Activated CD4-positive, alpha-beta memory T cell treated with anti-CD3 and anti-CD28 coated beads for 36 hours (primary cell): ENCODE measurements at regions of chr14 and their contacts with region 1.

Region 1: GRCh38 chr14:89954070-89955028 is at the start of gene EFCAB11:
- DNase-seq: peak; percentile 98
- H3K4me3 Mint-ChIP-seq: peak within 1 kb of the TSS; percentile 96
- H3K27ac Mint-ChIP-seq: peak within 1 kb of the TSS; percentile 97
- H3K4me1 Mint-ChIP-seq: peaks cover 36% of the 10 kb centered on the region
- H3K27me3 Mint-ChIP-seq: no peaks in the 10 kb centered on the region
- total RNA-seq, gene EFCAB11: 10.6 to 10.8 TPM

Region 2: GRCh38 chr14:88792572-88793258 is 1161.6 kb before region 1 on chr14 and contains the start of gene EML5:
- CTCF ChIA-PET with region 1: no interaction called
- POLR2A ChIA-PET with region 1: no interaction called
- intact Hi-C with region 1: loop called (anchors 5 kb)
- DNase-seq: peak; percentile 87
- H3K4me3 Mint-ChIP-seq: peak within 1 kb of the TSS; percentile 89
- H3K27ac Mint-ChIP-seq: peak within 1 kb of the TSS; percentile 74
- H3K4me1 Mint-ChIP-seq: peaks cover 25% of the 10 kb centered on the region
- H3K27me3 Mint-ChIP-seq: peaks cover 3% of the 10 kb centered on the region
- total RNA-seq, gene EML5: 5.7 to 6.2 TPM

Region 3: DNA sequence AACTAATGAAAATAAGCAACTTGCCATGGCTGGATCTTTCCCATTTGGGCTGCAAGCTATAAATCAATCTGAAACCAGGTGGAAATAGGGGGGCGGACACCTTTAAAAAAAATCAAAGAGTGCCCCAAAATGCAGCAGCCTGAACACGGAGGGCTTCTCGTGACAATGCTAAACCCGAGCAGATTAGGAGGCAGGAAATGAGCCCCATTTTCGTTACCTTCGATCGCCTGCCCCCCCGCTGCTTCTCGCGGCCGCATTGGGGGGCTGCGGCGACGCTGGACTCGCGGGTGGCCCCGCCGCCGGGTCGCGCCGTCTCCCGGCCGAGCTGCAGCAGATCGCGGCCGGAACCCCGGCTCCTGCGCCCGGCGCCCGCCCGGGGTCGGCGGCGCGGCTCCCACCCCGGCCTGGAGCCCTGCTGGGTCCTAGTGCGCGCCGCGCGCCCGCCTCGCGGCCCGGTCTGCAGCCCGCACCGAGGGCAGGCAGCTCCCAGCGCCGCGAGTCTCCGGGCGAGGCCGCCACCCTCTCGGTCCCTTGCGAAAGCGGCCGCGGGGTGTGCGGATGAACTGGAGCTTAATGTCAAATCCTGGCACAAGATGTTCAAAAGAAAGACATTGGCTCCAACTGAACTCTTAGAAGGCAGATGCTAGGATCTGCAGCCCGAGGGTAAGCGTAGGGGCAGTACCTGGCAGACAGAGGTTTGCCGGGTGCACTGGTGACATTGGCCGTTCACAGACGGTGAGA is 335.4 kb before region 1 on chr14:
- CTCF ChIA-PET with region 1: no interaction called
- POLR2A ChIA-PET with region 1: interaction called, 3 read pairs
- intact Hi-C with region 1: loop called (anchors 2 kb)
- DNase-seq: peak; percentile 71
- H3K4me3 Mint-ChIP-seq: peak overlapping the region; percentile 91
- H3K27ac Mint-ChIP-seq: peak overlapping the region; percentile 98
- H3K4me1 Mint-ChIP-seq: peaks cover 66% of the 10 kb centered on the region
- H3K27me3 Mint-ChIP-seq: no peaks in the 10 kb centered on the region

Region 4: DNA sequence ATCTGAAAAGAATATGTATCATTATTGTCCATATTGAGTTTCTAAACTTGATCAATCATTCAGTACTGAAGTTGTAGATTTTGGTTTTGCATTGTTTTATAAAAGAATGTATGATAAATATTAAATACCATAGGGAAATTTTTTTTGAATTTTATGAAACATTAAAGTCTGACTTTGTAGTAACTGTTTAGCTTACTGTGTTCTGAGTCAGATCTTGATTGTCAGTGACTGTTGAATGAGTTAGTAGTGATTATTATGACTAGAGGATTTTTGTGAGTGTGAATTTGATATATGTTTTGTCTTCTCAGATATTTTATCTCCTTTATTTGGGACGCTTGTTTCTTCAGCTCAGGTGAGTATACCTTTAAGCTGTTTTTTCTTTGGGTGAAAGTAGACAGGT is 11.5 kb after region 1 on chr14:
- CTCF ChIA-PET with region 1: interaction called, 10 read pairs
- POLR2A ChIA-PET with region 1: interaction called, 4 read pairs
- intact Hi-C with region 1: no loop called
- DNase-seq: no peak
- H3K4me3 Mint-ChIP-seq: no peak overlapping the region
- H3K27ac Mint-ChIP-seq: no peak overlapping the region
- H3K4me1 Mint-ChIP-seq: peaks cover 36% of the 10 kb centered on the region
- H3K27me3 Mint-ChIP-seq: no peaks in the 10 kb centered on the region

Region 5: DNA sequence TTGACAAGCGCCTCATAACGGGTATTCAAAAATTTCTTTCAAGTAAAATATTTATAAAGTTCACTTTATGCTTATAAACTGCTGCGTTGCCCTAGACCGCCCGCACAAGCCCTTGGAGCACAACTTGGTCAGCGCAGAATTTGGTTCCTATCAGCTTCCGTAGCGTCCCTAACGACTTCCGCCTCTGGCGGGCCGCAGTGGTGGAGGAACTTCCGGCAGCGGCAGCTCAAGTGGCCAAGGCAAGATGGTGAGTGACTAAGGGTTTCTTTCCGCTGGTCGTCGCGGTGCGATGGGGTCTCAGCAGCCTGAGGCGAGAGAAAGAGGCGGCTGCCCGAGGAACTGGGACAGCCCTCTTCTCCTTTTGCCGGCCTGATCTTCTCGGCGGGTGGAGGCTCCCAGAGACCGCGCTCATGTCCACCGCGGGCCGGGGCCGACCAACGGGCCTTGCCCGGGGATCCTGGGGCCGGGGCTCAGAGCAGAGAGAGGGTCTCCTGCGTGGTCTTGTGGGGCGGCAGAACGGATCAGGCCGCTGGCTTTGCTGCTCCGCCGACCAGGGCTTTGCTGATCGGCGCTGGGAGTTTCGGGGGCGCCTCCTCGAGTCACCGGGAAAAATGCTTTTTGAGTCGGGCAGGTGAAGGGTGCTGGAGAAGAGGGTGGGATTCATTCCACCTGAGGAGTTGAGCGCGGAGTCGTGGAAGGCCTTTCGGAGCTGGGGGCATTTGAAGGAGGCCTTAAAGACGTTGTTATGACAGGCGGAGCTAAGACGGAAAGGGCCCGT is 302.2 kb after region 1 on chr14 and contains the start of gene PSMC1:
- CTCF ChIA-PET with region 1: interaction called, 3 read pairs
- POLR2A ChIA-PET with region 1: interaction called, 11 read pairs
- intact Hi-C with region 1: loop called (anchors 1 kb)
- DNase-seq: peak; percentile 95
- H3K4me3 Mint-ChIP-seq: peak within 1 kb of the TSS; percentile 98
- H3K27ac Mint-ChIP-seq: peak within 1 kb of the TSS; percentile 94
- H3K4me1 Mint-ChIP-seq: peaks cover 26% of the 10 kb centered on the region
- H3K27me3 Mint-ChIP-seq: peaks cover 5% of the 10 kb centered on the region
- total RNA-seq, gene PSMC1: 107 to 108 TPM

Region 6: GRCh38 chr14:90399541-90400444 is 445.4 kb after region 1 on chr14:
- CTCF ChIA-PET with region 1: no interaction called
- POLR2A ChIA-PET with region 1: interaction called, 4 read pairs
- intact Hi-C with region 1: loop called (anchors 2 kb)
- DNase-seq: peak; percentile 92
- H3K4me3 Mint-ChIP-seq: peak overlapping the region; percentile 97
- H3K27ac Mint-ChIP-seq: peak overlapping the region; percentile 99
- H3K4me1 Mint-ChIP-seq: peaks cover 52% of the 10 kb centered on the region
- H3K27me3 Mint-ChIP-seq: no peaks in the 10 kb centered on the region